Posterior cingulate gyrus (tissue), 11 donors: ENCODE measurements at regions of chr1 and their contacts with region 1.

Region 1: DNA sequence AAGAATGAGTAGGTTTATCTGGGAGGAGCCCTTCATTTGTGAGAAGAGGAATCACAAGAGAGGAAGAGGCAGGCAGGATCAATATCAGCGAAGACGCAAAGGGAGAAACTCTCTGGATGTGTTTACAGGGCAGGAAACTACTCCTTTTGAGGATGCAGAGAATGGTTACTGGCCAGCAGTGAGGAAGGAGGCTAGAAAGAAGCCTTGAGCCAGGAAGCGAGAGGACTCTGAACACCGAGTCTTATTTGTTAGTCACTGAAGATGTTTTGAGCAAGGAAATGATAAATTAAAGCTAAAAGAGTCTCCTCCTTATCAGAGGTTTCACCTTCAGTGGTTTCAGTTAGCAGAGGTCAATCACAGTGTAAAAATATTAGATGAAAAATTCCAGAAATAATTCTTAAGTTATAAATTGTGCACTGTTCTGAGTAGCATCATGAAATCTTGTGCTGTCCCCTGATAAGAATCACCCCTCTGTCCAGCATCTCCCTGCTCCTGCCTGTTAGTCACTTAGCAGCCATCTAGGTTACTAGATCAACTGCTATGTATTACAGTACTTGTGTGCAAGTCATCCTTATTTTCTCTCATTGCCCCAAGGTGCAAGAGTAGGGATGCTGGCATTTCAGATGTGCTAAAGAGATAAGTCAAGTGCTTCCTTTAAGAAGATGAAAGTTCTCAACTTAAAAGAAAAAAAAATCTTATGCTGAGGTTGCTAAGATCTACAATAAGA is 43.5 kb downstream of the WLS start:
- DNase-seq: no peak

Region 2: DNA sequence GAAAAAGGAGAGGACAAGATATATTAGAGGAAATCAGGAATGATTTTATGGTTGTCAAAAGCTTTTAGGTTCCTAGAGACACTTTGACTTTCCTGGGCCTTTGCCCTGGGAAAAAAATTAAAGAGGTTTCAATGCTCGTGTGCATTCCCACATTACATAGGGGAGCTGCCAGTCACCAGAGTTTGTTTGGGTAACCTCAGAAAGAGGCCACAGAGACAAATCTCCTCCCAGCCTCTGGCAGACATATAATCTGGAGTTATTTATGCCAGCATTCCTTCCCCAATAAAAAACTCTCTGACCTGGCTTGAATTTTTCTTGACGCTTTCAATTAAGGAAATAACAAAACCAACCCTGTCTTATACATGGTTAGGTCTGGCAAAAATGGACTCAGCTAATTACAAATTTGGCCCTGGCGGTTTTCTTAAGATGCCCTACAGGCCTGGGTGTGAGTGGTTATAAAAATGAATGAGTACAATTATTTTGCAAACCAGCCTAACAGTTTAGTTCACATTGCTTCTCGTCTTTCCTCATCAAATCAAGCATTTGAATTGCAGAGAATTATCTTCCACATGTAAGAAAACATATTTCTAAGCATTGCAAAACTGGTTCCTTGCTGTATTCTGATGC is 20.1 kb before region 1 on chr1:
- intact Hi-C with region 1: loop called (anchors 1 kb)
- DNase-seq: no peak